Prostate gland (tissue), 2 donors: ENCODE measurements at regions of chr4 and their contacts with region 1.

Region 1: DNA sequence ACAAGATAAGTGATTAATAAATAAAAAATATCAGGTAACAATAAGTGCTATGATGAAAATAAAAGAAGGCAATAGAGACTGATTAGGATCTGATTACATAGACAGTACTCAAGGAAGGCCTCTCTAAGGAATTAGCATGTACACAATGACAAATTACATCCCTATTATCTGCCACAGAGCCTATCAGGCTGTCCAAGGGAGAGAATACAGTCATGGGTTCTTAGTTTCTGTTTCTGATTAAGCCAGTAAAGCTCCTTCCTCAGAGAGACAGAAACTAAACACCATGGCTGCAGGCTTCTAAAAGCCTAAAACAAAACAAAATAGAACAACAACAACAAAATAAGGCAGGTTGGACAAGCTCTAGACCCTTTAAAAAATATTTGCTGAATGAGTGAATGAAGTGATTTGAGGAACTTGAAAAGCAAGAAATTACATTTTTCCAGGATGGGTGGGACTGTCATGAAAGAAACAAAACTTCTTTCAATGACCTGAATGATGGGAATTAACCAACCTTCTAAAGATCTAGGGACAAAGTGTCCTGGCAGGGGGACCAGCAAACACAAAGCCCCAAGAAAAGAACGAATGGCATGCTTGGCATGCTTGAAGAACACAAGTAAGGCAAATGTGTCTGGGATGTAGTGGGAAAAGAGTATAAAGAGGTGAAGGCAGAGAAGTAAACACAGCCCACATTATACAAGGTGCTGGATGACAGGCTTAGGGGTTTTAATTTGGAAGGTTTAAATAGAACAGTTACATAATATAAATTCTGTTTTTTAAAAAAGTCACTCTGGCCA is 44.1 kb downstream of the NAA11 start:
- DNase-seq: peak; percentile 9
- H3K4me3 ChIP-seq: no peak overlapping the region
- H3K27ac ChIP-seq: peak overlapping the region; percentile 22 to 46
- H3K4me1 ChIP-seq: no peaks in the 10 kb centered on the region
- H3K27me3 ChIP-seq: no peaks in the 10 kb centered on the region
- CTCF ChIP-seq: no peak
- POLR2A ChIP-seq: no peak

Region 2: DNA sequence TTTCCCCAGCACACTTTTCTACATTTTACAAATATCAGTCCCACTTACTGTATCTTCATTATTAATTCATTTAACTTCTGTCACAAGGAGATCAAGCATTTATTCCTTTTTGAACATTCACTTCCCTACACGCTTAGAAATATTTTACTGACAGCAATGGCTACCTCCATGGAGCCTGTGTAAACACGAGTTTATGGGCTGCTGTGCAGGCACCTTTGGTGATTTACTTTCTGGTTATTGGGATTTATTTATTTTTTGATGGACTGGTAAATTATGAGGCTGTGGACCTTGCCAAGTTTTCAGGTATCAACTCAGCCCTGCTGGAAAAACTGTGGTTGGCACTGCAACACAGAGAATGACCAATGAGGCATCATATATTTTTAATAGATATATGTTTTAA is 297.2 kb before region 1 on chr4:
- intact Hi-C with region 1: loop called (anchors 10 kb)
- DNase-seq: no peak
- H3K4me3 ChIP-seq: no peak overlapping the region
- H3K27ac ChIP-seq: no peak overlapping the region
- H3K4me1 ChIP-seq: no peaks in the 10 kb centered on the region
- H3K27me3 ChIP-seq: no peaks in the 10 kb centered on the region
- CTCF ChIP-seq: no peak
- POLR2A ChIP-seq: no peak

Region 3: DNA sequence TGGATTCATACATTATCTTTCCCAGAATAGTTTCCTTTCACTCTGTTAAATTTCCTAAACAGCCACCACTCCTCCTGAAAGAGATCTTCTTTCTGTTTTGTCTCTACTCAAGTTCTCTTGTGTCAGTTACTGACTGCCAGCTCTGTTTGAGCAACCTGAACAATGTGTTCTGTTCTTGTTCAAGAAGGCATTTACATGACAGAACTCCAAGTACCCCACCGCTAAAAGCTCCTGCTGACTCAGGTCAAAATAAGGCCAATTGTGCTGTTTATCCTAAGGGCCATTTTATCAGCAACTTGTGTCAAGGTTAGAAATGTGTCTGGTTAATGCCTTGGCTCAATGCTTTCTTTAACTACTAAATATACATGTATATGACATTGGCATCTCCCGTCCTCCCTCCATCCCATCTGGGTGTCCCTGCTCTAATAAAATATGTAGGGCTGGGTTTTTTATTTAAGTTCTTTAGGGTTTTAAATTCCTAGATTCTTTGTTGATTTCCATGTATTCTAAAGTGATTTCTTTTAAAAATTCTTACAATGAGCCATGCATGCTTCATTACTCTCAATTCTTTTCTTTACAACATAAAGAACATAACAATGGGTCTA is 198.3 kb before region 1 on chr4:
- intact Hi-C with region 1: loop called (anchors 10 kb)
- DNase-seq: peak; percentile 78
- H3K4me3 ChIP-seq: peak overlapping the region in 1 of 2 donors; percentile 7
- H3K27ac ChIP-seq: peak overlapping the region; percentile 70 to 79
- H3K4me1 ChIP-seq: no peaks in the 10 kb centered on the region
- H3K27me3 ChIP-seq: no peaks in the 10 kb centered on the region
- CTCF ChIP-seq: no peak
- POLR2A ChIP-seq: no peak

Region 4: GRCh38 chr4:79178760-79179159 is 103.0 kb before region 1 on chr4:
- intact Hi-C with region 1: loop called (anchors 10 kb)
- DNase-seq: peak; percentile 48
- H3K4me3 ChIP-seq: no peak overlapping the region
- H3K27ac ChIP-seq: no peak overlapping the region
- H3K4me1 ChIP-seq: peaks cover 13% of the 10 kb centered on the region
- H3K27me3 ChIP-seq: no peaks in the 10 kb centered on the region
- CTCF ChIP-seq: no peak
- POLR2A ChIP-seq: no peak